Astrocyte of the cerebellum (primary cell): ENCODE measurements at regions of chr2 and their contacts with region 1.

Region 1: GRCh38 chr2:59560769-59561168 is 992.7 kb downstream of the BCL11A start:
- DNase-seq: no peak
- H3K4me3 ChIP-seq: no peak overlapping the region
- CTCF ChIP-seq: no peak

Region 2: DNA sequence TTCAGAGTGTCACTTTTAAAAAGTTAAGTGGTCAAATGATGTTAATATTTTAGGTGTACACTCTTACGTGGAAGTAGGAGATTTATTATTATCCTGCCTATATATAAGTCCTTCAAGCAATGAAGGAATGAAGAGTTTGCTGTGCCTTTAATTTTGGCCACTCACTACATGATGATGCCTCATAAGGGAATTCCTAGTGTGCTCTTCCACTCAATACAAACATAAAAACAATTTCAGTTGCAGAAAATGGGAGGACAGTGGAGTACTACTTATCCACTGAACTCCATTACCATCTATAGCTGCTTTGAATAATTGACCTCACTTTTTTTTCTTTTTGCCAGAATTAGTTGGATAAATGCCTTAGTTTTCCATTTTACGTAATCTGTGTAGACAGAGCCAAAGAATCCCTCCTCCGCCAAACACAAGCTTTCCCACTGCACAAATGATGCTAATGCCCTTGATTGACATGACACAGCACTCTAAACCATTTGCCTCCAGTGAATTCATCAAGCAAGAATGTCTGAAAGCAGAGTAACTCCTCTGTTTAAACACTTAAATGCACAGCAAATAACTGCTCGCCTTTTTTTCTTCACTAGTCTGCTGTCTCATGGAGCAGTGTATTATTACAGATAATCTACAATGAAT is 568.6 kb before region 1 on chr2:
- in situ Hi-C with region 1: no loop called
- DNase-seq: no peak
- H3K4me3 ChIP-seq: no peak overlapping the region
- CTCF ChIP-seq: no peak

Region 3: GRCh38 chr2:59458800-59459199 is 102.0 kb before region 1 on chr2:
- in situ Hi-C with region 1: loop called (anchors 5 kb)
- DNase-seq: no peak
- H3K4me3 ChIP-seq: no peak overlapping the region
- CTCF ChIP-seq: no peak